Posterior vena cava (tissue), 2 donors: ENCODE measurements at regions of chr10 and their contacts with region 1.

Region 1: GRCh38 chr10:26887611-26888188 is 26.9 kb upstream of the ABI1 start:
- DNase-seq: no peak

Region 2: DNA sequence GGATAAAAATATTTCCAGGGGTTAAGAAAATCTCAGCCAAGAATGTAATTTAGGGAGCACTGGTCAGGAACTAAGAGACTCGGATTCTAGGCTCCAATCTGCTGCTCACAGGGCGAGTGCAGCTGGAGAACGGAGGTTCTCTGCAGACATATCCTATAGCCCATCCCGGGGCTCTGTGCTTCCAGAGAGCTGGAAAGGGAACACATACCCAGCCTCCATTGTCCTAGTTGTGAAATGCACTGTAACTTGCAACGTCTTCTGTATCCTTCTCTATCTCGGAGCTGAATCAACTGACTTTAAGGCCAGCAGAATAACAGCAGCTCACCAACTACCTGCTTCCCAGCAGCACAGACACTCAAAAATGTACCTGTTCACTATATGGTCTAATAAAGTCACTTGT is 1304.7 kb before region 1 on chr10:
- intact Hi-C with region 1: no loop called
- DNase-seq: no peak

Region 3: DNA sequence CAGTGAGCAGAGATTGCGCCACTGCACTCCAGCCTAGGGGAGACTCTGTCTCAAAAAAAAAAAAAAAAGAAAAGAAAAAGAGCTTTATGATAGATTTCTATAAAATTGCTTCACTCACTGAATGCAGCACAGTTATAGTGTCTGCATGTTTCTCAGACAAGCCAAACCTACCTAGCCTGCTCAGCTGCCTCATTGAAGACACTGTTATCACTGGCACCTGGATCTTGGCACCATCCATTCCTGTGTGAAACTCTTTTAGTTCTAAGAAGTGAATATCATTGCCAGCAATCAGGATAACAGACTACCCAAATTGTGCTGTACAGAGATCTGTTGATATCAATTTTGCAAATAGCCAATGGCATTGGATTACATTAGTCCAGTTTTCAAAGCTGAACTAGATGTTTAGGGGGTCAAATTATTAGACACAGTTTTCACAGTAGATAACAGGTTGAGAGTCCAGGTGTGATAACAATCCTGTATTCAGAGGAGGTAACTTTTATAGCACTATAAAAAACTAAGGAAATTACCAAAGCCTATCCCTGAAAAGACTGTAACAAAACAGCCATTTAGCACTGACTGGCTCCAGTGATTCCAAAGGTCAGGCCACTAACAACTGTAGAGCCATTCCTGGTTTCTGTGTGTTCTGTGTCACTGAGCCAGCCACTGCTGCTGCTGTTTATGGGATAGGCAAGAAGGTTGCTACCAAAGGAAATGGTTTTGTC is 173.1 kb before region 1 on chr10:
- intact Hi-C with region 1: loop called in 1 of 2 experiments (anchors 5 kb)
- DNase-seq: no peak